PC-9 (cell line): ENCODE measurements at regions of chr15 and their contacts with region 1.

Region 1: GRCh38 chr15:39125904-39126303 is 455.0 kb upstream of the THBS1 start:
- DNase-seq: peak in 1 of 2 experiments; percentile 22
- H3K4me3 ChIP-seq: no peak overlapping the region
- H3K27ac ChIP-seq: no peak overlapping the region
- H3K4me1 ChIP-seq: peaks cover 74% of the 10 kb centered on the region
- H3K27me3 ChIP-seq: no peaks in the 10 kb centered on the region
- CTCF ChIP-seq: peak; percentile 51; the same call in 1 of the 2 replicates

Region 2: GRCh38 chr15:38707802-38708671 is 417.9 kb before region 1 on chr15:
- CTCF ChIA-PET with region 1: no interaction called
- POLR2A ChIA-PET with region 1: no interaction called
- intact Hi-C with region 1: loop called (anchors 1 kb)
- DNase-seq: peak in 1 of 2 experiments; percentile 43
- H3K4me3 ChIP-seq: no peak overlapping the region
- H3K27ac ChIP-seq: no peak overlapping the region
- H3K4me1 ChIP-seq: peaks cover 3% of the 10 kb centered on the region
- H3K27me3 ChIP-seq: no peaks in the 10 kb centered on the region
- CTCF ChIP-seq: peak; percentile 77

Region 3: GRCh38 chr15:38868326-38869114 is 257.4 kb before region 1 on chr15:
- CTCF ChIA-PET with region 1: interaction called, 3 read pairs
- POLR2A ChIA-PET with region 1: no interaction called
- intact Hi-C with region 1: loop called (anchors 5 kb)
- DNase-seq: peak; percentile 72 to 80
- H3K4me3 ChIP-seq: no peak overlapping the region
- H3K27ac ChIP-seq: peak overlapping the region; percentile 40
- H3K4me1 ChIP-seq: peaks cover 7% of the 10 kb centered on the region
- H3K27me3 ChIP-seq: no peaks in the 10 kb centered on the region
- CTCF ChIP-seq: no peak

Region 4: GRCh38 chr15:38975282-38975990 is 150.5 kb before region 1 on chr15:
- CTCF ChIA-PET with region 1: no interaction called
- POLR2A ChIA-PET with region 1: no interaction called
- intact Hi-C with region 1: no loop called
- DNase-seq: no peak
- H3K4me3 ChIP-seq: no peak overlapping the region
- H3K27ac ChIP-seq: no peak overlapping the region
- H3K4me1 ChIP-seq: no peaks in the 10 kb centered on the region
- H3K27me3 ChIP-seq: no peaks in the 10 kb centered on the region
- CTCF ChIP-seq: no peak

Region 5: DNA sequence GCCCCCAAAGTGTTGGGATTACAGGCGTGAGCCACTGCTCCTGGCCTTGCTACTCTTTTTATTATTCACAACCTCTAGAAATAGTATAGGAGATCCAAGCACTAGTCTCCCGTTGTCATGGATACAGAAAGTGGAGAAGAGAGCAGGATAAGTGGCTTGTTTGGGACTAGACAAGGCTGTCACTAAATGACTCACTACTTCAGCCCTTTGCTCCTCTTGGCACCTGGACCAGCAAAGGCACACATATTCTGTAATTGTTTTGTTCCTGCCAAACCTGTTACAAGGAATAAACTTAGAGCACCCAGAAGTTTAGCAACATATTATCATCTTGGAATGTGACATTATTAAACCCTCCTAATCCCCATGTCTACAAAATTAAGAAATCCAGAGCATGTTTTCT is 27.8 kb after region 1 on chr15:
- CTCF ChIA-PET with region 1: no interaction called
- POLR2A ChIA-PET with region 1: no interaction called
- intact Hi-C with region 1: loop called (anchors 1 kb)
- DNase-seq: peak; percentile 43 to 89
- H3K4me3 ChIP-seq: no peak overlapping the region
- H3K27ac ChIP-seq: peak overlapping the region; percentile 65
- H3K4me1 ChIP-seq: peaks cover 25% of the 10 kb centered on the region
- H3K27me3 ChIP-seq: no peaks in the 10 kb centered on the region
- CTCF ChIP-seq: no peak

Region 6: DNA sequence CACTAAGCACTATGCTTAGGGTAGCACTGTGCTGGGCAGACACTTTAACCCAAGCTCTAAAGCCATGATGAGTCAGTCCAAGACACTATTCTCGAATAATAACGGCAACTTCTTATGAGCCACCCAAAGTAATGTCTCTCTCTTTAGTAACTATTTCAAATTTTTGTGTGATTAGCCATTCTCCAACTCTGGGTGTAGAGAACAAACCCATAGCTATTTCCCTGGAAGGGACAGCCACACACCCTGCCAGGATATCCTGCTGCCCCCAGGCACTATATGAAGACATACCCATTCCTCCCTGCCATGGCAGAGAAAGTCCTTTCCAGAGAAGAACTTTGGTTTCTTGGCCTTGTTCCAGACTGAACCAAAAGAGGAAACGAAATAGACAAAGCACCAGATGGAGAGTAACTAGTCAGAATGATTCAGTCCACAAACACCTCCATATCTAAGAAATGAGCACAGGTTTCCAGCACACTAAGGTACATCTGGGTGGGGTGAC is 70.1 kb after region 1 on chr15:
- CTCF ChIA-PET with region 1: no interaction called
- POLR2A ChIA-PET with region 1: interaction called, 5 read pairs
- intact Hi-C with region 1: loop called (anchors 2 kb)
- DNase-seq: peak; percentile 86 to 97
- H3K4me3 ChIP-seq: no peak overlapping the region
- H3K27ac ChIP-seq: peak overlapping the region; percentile 79
- H3K4me1 ChIP-seq: peaks cover 32% of the 10 kb centered on the region
- H3K27me3 ChIP-seq: no peaks in the 10 kb centered on the region
- CTCF ChIP-seq: no peak

Region 7: GRCh38 chr15:39594056-39594763 is 468.3 kb after region 1 on chr15:
- CTCF ChIA-PET with region 1: no interaction called
- POLR2A ChIA-PET with region 1: interaction called, 10 read pairs
- intact Hi-C with region 1: no loop called
- DNase-seq: no peak
- H3K4me3 ChIP-seq: no peak overlapping the region
- H3K27ac ChIP-seq: no peak overlapping the region
- H3K4me1 ChIP-seq: no peaks in the 10 kb centered on the region
- H3K27me3 ChIP-seq: no peaks in the 10 kb centered on the region
- CTCF ChIP-seq: no peak